ENCODE measurements at regions of chr4 and their contacts with region 1.

Region 1: GRCh38 chr4:102500696-102501446 is at the start of gene NFKB1:
- DNase-seq: peak; percentile 89
- ATAC-seq: peak; percentile 70
- H3K4me3 Mint-ChIP-seq: peak within 1 kb of the TSS; percentile 93
- H3K27ac Mint-ChIP-seq: peak within 1 kb of the TSS; percentile 93
- H3K4me1 Mint-ChIP-seq: peaks cover 12% of the 10 kb centered on the region
- H3K27me3 Mint-ChIP-seq: no peaks in the 10 kb centered on the region
- CTCF ChIP-seq: no peak
- total RNA-seq, gene NFKB1: 224 to 230 TPM

Region 2: DNA sequence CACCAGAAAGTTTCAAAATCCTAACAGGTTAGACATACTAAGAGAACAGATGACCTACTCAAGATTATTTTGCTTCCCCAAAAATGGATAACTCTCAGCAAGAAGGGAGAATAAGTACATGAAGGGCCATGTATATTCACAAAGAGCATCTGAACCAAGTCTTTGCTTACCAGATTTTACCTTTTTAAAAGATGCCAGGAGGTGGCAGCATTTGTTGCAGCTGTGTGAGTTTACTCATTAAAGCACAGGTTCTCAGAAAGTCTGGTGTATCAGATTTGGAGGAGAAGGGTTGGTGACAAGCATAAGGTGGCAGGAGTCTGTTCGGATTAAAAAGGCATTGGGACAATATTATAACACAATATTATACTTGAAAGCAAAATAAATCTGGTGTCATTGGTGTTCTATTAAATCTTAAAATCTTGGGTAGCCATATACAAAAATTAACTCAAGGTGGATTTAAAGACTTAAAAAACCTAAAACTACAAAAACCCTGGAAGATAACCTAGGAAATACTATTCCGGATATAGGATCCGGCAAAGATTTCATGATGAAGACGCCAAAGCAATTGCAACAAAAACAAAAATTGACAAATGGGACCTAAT is 51.0 kb before region 1 on chr4:
- CTCF ChIA-PET with region 1: interaction called, 8 read pairs
- POLR2A ChIA-PET with region 1: no interaction called
- intact Hi-C with region 1: loop called (anchors 5 kb)
- DNase-seq: peak; percentile 73
- ATAC-seq: peak; percentile 77
- H3K4me3 Mint-ChIP-seq: no peak overlapping the region
- H3K27ac Mint-ChIP-seq: no peak overlapping the region
- H3K4me1 Mint-ChIP-seq: peaks cover 48% of the 10 kb centered on the region
- H3K27me3 Mint-ChIP-seq: no peaks in the 10 kb centered on the region
- CTCF ChIP-seq: peak; percentile 88

Region 3: GRCh38 chr4:102511830-102512605 is 11.1 kb after region 1 on chr4:
- CTCF ChIA-PET with region 1: interaction called, 4 read pairs
- POLR2A ChIA-PET with region 1: interaction called, 13 read pairs
- intact Hi-C with region 1: no loop called
- DNase-seq: no peak
- ATAC-seq: no peak
- H3K4me3 Mint-ChIP-seq: no peak overlapping the region
- H3K27ac Mint-ChIP-seq: peak overlapping the region; percentile 33
- H3K4me1 Mint-ChIP-seq: peaks cover 75% of the 10 kb centered on the region
- H3K27me3 Mint-ChIP-seq: no peaks in the 10 kb centered on the region
- CTCF ChIP-seq: no peak

Region 4: GRCh38 chr4:102525097-102525496 is 24.2 kb after region 1 on chr4:
- CTCF ChIA-PET with region 1: interaction called, 10 read pairs
- POLR2A ChIA-PET with region 1: interaction called, 10 read pairs
- intact Hi-C with region 1: no loop called
- DNase-seq: no peak
- ATAC-seq: no peak
- H3K4me3 Mint-ChIP-seq: peak overlapping the region; percentile 17
- H3K27ac Mint-ChIP-seq: peak overlapping the region; percentile 84
- H3K4me1 Mint-ChIP-seq: peaks cover 91% of the 10 kb centered on the region
- H3K27me3 Mint-ChIP-seq: no peaks in the 10 kb centered on the region
- CTCF ChIP-seq: no peak

Region 5: GRCh38 chr4:102535398-102536082 is 34.7 kb after region 1 on chr4:
- CTCF ChIA-PET with region 1: no interaction called
- POLR2A ChIA-PET with region 1: interaction called, 10 read pairs
- intact Hi-C with region 1: loop called (anchors 5 kb)
- DNase-seq: no peak
- ATAC-seq: peak; percentile 82
- H3K4me3 Mint-ChIP-seq: peak overlapping the region; percentile 17
- H3K27ac Mint-ChIP-seq: peak overlapping the region; percentile 74
- H3K4me1 Mint-ChIP-seq: peaks cover 62% of the 10 kb centered on the region
- H3K27me3 Mint-ChIP-seq: no peaks in the 10 kb centered on the region
- CTCF ChIP-seq: no peak

Region 6: DNA sequence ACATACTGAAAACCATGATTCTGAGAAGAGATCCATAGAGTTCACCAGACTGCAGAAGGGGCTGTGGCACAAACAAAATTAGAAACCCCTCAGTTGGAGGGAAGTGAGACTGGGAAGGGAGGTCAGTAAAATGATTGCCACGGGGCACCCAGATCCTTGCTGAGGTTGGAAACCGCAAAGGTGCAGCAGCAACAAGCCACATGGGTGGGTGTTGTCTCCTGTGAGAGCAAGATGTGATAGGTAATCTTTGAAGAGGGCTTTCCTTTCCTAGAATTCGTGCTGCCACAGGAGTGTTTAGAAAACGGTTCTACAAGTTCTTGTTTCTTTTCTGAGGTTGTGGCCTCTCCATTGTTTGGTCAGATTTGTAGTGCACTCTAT is 85.8 kb after region 1 on chr4:
- CTCF ChIA-PET with region 1: interaction called, 4 read pairs
- POLR2A ChIA-PET with region 1: interaction called, 7 read pairs
- intact Hi-C with region 1: loop called (anchors 5 kb)
- DNase-seq: peak; percentile 83
- ATAC-seq: peak; percentile 62
- H3K4me3 Mint-ChIP-seq: no peak overlapping the region
- H3K27ac Mint-ChIP-seq: peak overlapping the region; percentile 95
- H3K4me1 Mint-ChIP-seq: peaks cover 87% of the 10 kb centered on the region
- H3K27me3 Mint-ChIP-seq: no peaks in the 10 kb centered on the region
- CTCF ChIP-seq: no peak

Region 7: GRCh38 chr4:102640669-102641068 is 139.8 kb after region 1 on chr4:
- CTCF ChIA-PET with region 1: no interaction called
- POLR2A ChIA-PET with region 1: no interaction called
- intact Hi-C with region 1: no loop called
- DNase-seq: no peak
- ATAC-seq: no peak
- H3K4me3 Mint-ChIP-seq: no peak overlapping the region
- H3K27ac Mint-ChIP-seq: no peak overlapping the region
- H3K4me1 Mint-ChIP-seq: peaks cover 11% of the 10 kb centered on the region
- H3K27me3 Mint-ChIP-seq: no peaks in the 10 kb centered on the region
- CTCF ChIP-seq: no peak

Measured in activated CD8-positive, alpha-beta T cell treated with anti-CD3 and anti-CD28 coated beads for 36 hours (primary cell).